ENCODE measurements at regions of chr6 and their contacts with region 1.

Region 1: GRCh38 chr6:41072676-41073623 is at the start of gene NFYA:
- DNase-seq: peak; percentile 100
- H3K4me3 Mint-ChIP-seq: peak within 1 kb of the TSS; percentile 95
- H3K27ac Mint-ChIP-seq: peak within 1 kb of the TSS; percentile 99
- H3K4me1 Mint-ChIP-seq: peaks cover 66% of the 10 kb centered on the region
- H3K27me3 Mint-ChIP-seq: peaks cover 5% of the 10 kb centered on the region
- total RNA-seq, gene NFYA: 29.6 and 30.1 TPM in 2 replicates

Region 2: GRCh38 chr6:41027799-41028628 is 44.9 kb before region 1 on chr6:
- intact Hi-C with region 1: loop called (anchors 1 kb)
- DNase-seq: peak; percentile 77
- H3K4me3 Mint-ChIP-seq: peak overlapping the region; percentile 89
- H3K27ac Mint-ChIP-seq: peak overlapping the region; percentile 85
- H3K4me1 Mint-ChIP-seq: peaks cover 22% of the 10 kb centered on the region
- H3K27me3 Mint-ChIP-seq: no peaks in the 10 kb centered on the region

Region 3: GRCh38 chr6:41182069-41183034 is 109.4 kb after region 1 on chr6:
- intact Hi-C with region 1: loop called (anchors 2 kb)
- DNase-seq: peak; percentile 41
- H3K4me3 Mint-ChIP-seq: no peak overlapping the region
- H3K27ac Mint-ChIP-seq: no peak overlapping the region
- H3K4me1 Mint-ChIP-seq: peaks cover 38% of the 10 kb centered on the region
- H3K27me3 Mint-ChIP-seq: peaks cover 1% of the 10 kb centered on the region

Region 4: DNA sequence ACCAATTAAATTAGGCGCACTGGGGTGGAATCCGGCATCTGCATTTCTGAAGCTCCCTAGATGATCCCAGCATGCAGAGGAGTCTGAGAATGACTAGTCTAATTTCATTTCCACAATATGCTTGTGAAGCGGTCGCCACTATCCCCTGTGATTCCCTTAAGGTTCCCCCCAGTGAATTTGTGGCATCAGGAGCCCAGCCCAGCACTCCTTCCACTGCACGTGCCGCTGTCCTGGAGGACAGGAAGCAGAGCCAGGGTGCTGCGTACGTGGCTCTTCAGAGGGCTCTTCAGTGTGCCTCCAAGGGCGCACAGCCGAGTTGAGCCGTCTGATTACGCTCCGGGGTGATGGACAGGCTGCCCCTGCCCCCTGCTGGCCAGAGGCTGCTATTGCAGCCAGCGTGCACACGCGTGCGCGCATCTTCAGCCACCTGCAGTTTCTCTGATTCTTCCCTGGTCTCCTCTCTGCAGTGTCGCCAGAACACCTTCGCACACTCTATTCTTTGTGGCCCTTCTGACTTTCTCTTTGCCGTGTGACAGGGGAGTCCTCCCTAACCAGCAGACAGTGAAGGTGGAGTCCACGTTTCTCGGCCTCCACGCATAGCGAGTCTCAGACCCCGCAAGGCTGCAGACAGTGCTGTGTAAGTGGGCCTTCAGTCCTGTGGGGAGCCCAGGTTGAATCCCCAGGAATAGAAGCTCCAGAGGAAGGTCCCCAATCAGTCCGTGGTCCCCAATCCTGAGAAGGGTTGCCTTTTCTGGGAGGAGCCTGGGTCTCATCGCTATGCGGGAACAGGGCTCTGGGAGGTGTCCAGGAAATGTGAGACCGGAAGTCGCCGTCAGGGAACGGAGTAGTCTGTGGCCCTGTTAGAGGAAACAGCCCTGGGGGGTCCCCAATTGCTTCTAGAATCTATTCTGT is 246.0 kb after region 1 on chr6:
- intact Hi-C with region 1: loop called (anchors 1 kb)
- DNase-seq: peak; percentile 78
- H3K4me3 Mint-ChIP-seq: peak overlapping the region; percentile 56
- H3K27ac Mint-ChIP-seq: peak overlapping the region; percentile 79
- H3K4me1 Mint-ChIP-seq: peaks cover 23% of the 10 kb centered on the region
- H3K27me3 Mint-ChIP-seq: peaks cover 27% of the 10 kb centered on the region

Region 5: DNA sequence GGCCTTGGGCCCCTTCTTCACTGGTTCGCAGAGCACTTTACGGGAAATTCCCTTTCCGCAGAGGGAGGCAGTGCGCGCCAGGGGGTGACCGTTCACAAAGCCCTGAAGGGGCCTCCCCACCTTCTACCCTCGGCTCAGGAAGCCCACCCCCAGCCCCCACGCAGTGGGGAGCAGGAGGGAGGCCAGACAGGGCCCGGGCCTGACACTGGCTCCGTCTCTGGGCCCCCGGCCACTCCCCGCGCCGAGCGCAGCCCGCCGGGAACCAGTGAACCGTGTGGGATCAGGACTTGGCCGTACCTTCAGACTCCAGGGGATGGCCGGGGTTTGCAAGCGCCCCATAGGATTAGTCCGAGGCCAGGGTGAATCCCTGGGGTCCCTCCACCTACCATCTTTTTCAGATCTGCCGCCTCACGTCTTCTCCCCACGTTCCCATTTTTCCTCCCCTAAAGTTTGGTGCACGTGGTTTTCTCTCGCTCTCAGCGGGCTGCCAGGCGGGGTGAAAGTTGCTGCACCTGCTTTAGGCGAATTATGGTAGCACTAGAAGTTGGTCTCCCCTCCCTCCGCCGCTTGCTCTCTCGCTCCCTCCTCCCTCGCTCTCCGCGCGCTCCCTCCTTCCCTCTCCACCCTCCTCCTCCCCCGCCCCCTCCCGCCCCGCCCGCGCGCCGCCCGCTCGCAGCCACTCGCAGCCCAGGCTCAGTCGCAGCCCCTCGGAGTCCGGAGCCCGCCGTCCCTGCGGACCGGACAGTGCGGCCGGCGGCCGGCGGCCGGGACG is 472.9 kb after region 1 on chr6 and contains the start of gene FOXP4:
- intact Hi-C with region 1: loop called (anchors 1 kb)
- DNase-seq: peak; percentile 77
- H3K4me3 Mint-ChIP-seq: peak within 1 kb of the TSS; percentile 88
- H3K27ac Mint-ChIP-seq: peak within 1 kb of the TSS; percentile 90
- H3K4me1 Mint-ChIP-seq: peaks cover 34% of the 10 kb centered on the region
- H3K27me3 Mint-ChIP-seq: peaks cover 39% of the 10 kb centered on the region
- total RNA-seq, gene FOXP4: 21.6 and 24.0 TPM in 2 replicates

Region 6: DNA sequence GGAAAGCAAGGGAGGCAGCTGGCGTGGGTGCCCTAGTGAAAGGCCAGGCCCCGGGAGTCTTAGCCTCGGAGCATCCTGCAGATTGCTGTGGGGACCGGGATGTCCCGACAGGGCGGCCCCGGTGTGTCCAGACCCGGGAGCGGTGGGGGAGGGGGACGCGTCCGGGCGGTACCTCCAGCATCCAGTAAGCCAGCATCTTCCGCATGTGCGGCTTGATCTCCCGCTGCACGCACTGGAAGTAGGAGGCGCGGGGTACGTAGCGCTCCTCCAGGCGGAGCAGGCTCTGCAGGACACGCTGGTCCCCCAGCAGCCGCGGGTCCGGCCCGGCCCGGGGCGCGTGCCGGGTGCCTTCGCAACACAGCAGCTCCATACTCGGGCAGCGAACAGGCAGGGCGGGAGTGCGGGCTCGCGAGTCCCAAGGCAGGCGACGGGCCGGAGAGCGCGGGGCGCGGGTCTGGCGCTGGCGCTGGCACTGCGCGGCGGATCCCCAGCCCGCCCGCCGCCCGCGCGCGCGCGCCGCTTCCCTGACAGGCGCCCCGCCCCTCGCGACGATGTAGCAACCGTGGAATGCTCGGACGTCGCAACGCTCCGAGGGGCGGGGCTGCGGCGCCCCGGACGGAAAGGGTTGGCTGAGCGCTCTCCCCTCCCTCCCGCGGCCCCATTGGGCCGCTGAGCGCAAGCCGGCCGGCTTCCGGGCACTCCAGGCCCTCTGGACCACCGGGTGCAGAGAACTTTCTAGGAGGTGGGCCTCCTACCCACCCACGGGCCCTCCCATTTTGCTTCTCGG is 868.5 kb after region 1 on chr6 and contains the start of gene CCND3:
- intact Hi-C with region 1: loop called (anchors 5 kb)
- DNase-seq: peak; percentile 89
- H3K4me3 Mint-ChIP-seq: peak within 1 kb of the TSS; percentile 99
- H3K27ac Mint-ChIP-seq: peak within 1 kb of the TSS; percentile 94
- H3K4me1 Mint-ChIP-seq: peaks cover 43% of the 10 kb centered on the region
- H3K27me3 Mint-ChIP-seq: no peaks in the 10 kb centered on the region
- total RNA-seq, gene CCND3: 351 and 356 TPM in 2 replicates

Measured in activated T-helper 1 cell treated with anti-CD3 and anti-CD28 coated beads, Interleukin-12 subunit alpha, Interleukin-12 subunit beta, Interleukin-2, Interleukin-4 antibody, amounts not matched to agents 30 ng/mL and 10 ng/mL and 1 ng/mL, durations not matched to agents 14 hours and 24 hours and 36 hours (primary cell).